Sigmoid colon (tissue), 7 donors: ENCODE measurements at regions of chr19 and their contacts with region 1.

Region 1: DNA sequence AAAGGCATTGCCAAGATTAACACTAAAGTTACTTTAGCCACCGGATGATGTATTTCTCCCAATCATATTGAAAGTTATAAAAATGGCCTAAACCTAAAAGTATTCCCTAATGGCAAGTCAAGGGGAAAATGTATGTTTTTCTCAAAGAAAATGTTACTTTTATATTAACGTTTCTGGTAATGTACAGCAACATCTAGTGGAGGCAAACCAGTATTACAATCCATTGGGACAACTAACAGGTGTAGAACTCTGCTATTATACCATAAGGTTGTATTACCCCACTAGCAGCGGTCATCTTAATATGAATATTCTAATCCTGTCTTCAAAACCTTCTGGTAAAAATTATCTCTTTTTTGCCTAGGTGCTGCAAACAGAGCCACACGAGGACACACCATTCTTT is 69.2 kb downstream of the ZNF100 start:
- DNase-seq: no peak
- H3K4me3 ChIP-seq: no peak overlapping the region
- H3K27ac ChIP-seq: no peak overlapping the region
- H3K4me1 ChIP-seq: peaks cover 0 to 10% (median 3%) of the 10 kb centered on the region in 4 donors
- H3K27me3 ChIP-seq: no peaks in the 10 kb centered on the region
- CTCF ChIP-seq: peak in 3 of 4 experiments; percentile 44 to 66 (median 56)
- EP300 ChIP-seq: no peak
- POLR2A ChIP-seq: no peak

Region 2: DNA sequence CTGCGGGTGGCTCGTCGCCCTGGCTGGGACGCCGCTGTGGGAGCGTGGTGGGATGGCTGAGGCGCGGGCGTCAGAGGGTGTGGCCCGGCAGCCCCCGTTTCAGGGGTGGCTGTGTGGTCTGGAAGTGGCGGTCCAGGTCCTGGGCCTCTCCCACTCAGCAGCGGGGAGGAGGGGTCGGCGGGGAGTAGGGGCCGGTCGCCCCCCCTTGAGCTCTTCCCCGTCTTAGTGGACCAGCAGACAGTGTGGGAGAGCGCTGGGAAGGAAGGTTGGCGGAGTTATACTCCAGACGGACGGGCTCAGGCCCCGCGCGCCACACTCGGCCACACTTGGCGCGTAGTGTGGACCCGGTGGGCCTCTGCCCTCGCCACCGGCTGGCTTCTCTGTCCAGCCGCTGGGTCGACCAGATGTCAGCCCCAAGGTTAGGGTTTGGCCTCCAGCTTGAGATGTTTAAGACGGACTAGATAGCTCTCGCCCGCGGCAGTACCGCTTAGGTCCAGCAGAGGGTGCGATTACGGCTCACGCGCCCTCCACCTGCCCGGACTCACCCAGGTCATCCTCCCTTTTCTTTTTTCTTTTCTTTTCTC is 214.5 kb before region 1 on chr19:
- intact Hi-C with region 1: loop called (anchors 2 kb)
- DNase-seq: peak; percentile 76
- H3K4me3 ChIP-seq: peak overlapping the region in 2 of 4 donors; percentile 0 to 31
- H3K27ac ChIP-seq: peak overlapping the region in 1 of 4 donors; percentile 60
- H3K4me1 ChIP-seq: no peaks in the 10 kb centered on the region
- H3K27me3 ChIP-seq: no peaks in the 10 kb centered on the region
- CTCF ChIP-seq: peak; percentile 31 to 78 (median 48)
- EP300 ChIP-seq: no peak
- POLR2A ChIP-seq: no peak

Region 3: GRCh38 chr19:21532904-21533303 is 165.3 kb before region 1 on chr19:
- intact Hi-C with region 1: no loop called
- DNase-seq: no peak
- H3K4me3 ChIP-seq: no peak overlapping the region
- H3K27ac ChIP-seq: no peak overlapping the region
- H3K4me1 ChIP-seq: no peaks in the 10 kb centered on the region
- H3K27me3 ChIP-seq: no peaks in the 10 kb centered on the region
- CTCF ChIP-seq: no peak
- EP300 ChIP-seq: no peak
- POLR2A ChIP-seq: no peak

Region 4: GRCh38 chr19:21586311-21587116 is 111.7 kb before region 1 on chr19:
- intact Hi-C with region 1: loop called (anchors 10 kb)
- DNase-seq: no peak
- H3K4me3 ChIP-seq: peak overlapping the region; percentile 49 to 83 (median 74)
- H3K27ac ChIP-seq: peak overlapping the region; percentile 41 to 75 (median 64)
- H3K4me1 ChIP-seq: peaks cover 0 to 15% (median 5%) of the 10 kb centered on the region in 4 donors
- H3K27me3 ChIP-seq: no peaks in the 10 kb centered on the region
- CTCF ChIP-seq: no peak
- EP300 ChIP-seq: no peak
- POLR2A ChIP-seq: no peak

Region 5: DNA sequence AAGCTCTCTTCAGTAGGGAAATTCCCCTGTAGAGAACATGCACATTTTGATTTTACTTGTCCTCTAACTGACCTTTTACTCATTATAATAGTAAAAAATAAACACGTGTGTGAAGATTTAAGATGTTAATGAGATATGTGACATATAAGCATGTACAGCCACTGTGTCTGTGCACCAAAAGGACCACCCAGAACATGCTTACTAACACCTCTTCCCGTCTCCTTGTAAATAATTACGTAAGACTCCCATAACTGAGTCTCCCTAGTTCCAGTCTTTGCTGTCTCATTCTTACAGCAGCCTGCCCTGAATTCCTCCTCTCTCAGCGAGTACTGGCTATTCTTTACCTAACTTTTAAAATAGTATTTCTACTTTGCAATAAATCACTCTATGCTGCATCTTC is 15.5 kb after region 1 on chr19:
- intact Hi-C with region 1: no loop called
- DNase-seq: no peak
- H3K4me3 ChIP-seq: no peak overlapping the region
- H3K27ac ChIP-seq: no peak overlapping the region
- H3K4me1 ChIP-seq: no peaks in the 10 kb centered on the region
- H3K27me3 ChIP-seq: no peaks in the 10 kb centered on the region
- CTCF ChIP-seq: no peak
- EP300 ChIP-seq: no peak
- POLR2A ChIP-seq: no peak